ENCODE measurements at regions of chr6 and their contacts with region 1.

Region 1: DNA sequence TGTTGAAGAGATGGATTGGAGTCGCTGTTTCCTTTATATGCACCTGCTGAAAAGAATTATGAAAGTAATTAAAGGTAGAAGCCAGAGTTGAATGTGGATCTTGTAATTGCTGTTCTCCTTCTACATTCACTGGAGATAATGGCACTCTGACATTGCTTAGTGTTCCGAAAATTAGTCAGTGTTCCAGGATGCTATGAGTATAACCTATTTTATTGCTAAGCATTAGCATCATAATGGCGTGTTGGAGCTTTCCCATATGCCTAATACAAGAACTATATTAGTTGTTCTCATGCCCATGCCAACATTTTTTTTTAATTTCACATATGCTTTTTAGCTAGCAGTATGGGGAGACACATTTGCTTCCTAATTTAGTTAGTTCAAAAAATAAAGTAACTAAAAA is 236.4 kb downstream of the ARHGAP18 start:
- DNase-seq: no peak
- H3K4me3 ChIP-seq: no peak overlapping the region
- H3K27ac ChIP-seq: no peak overlapping the region
- H3K4me1 ChIP-seq: no peaks in the 10 kb centered on the region
- H3K27me3 ChIP-seq: no peaks in the 10 kb centered on the region
- CTCF ChIP-seq: no peak

Region 2: GRCh38 chr6:129755787-129756186 is 282.2 kb after region 1 on chr6:
- CTCF ChIA-PET with region 1: no interaction called
- POLR2A ChIA-PET with region 1: interaction called, 17 read pairs
- intact Hi-C with region 1: no loop called
- DNase-seq: no peak
- H3K4me3 ChIP-seq: no peak overlapping the region
- H3K27ac ChIP-seq: no peak overlapping the region
- H3K4me1 ChIP-seq: no peaks in the 10 kb centered on the region
- H3K27me3 ChIP-seq: no peaks in the 10 kb centered on the region
- CTCF ChIP-seq: no peak

Region 3: GRCh38 chr6:129895692-129896091 is 422.1 kb after region 1 on chr6:
- CTCF ChIA-PET with region 1: no interaction called
- POLR2A ChIA-PET with region 1: no interaction called
- intact Hi-C with region 1: no loop called
- DNase-seq: no peak
- H3K4me3 ChIP-seq: no peak overlapping the region
- H3K27ac ChIP-seq: no peak overlapping the region
- H3K4me1 ChIP-seq: no peaks in the 10 kb centered on the region
- H3K27me3 ChIP-seq: no peaks in the 10 kb centered on the region
- CTCF ChIP-seq: no peak